ENCODE measurements at regions of chr4 and their contacts with region 1.

Region 1: DNA sequence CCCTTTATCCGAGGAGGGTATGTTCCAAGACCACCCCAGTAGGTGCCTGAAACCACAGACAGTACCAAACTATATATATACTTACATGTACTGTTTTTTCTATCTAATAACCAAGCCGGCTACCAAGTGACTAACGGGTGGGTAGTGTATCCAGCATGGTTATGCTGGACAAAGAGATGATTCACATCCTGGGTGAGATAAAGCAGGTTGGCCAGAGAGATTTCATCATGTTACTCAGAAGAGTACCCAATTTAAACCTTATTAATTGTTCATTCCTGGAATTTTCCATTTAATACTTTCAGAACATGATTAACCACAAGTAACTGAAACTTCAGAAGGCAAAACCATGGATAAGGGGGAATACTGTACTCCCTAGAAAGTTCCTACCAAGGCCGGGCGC is 46.5 kb downstream of the RFC1 start:
- DNase-seq: peak; percentile 94
- H3K4me3 ChIP-seq: peak overlapping the region in 2 of 3 experiments; percentile 22 to 35
- H3K27ac ChIP-seq: peak overlapping the region; percentile 83
- H3K4me1 ChIP-seq: peaks cover 25% of the 10 kb centered on the region
- H3K27me3 ChIP-seq: no peaks in the 10 kb centered on the region
- CTCF ChIP-seq: no peak

Region 2: DNA sequence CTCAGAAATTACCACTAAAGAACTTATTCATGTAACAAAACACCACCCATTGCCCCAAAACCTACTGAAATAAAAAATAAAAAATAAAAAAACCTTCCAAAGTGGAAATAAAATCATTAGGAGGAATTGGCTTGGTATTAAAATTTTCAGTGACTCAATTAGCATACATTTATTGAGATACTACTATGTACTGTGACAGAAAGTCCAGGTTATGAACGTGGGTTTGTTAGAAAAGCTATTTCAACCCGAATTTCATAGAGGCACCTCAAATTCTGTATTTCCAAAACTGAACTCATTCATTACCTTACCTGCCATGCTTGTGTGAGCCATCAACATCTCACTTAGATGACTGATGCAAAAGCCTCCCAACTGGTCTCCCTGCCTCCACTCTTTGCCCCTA is 240.8 kb before region 1 on chr4:
- CTCF ChIA-PET with region 1: no interaction called
- dilution Hi-C with region 1: no loop called
- in situ Hi-C with region 1: no loop called
- intact Hi-C with region 1: no loop called
- DNase-seq: no peak
- H3K4me3 ChIP-seq: no peak overlapping the region
- H3K27ac ChIP-seq: no peak overlapping the region
- H3K4me1 ChIP-seq: peaks cover 4% of the 10 kb centered on the region
- H3K27me3 ChIP-seq: no peaks in the 10 kb centered on the region
- CTCF ChIP-seq: no peak

Region 3: GRCh38 chr4:39353478-39354253 is 34.0 kb after region 1 on chr4:
- CTCF ChIA-PET with region 1: no interaction called
- dilution Hi-C with region 1: no loop called
- in situ Hi-C with region 1: no loop called
- intact Hi-C with region 1: loop called (anchors 5 kb)
- DNase-seq: peak; percentile 48
- H3K4me3 ChIP-seq: peak overlapping the region; percentile 29 to 52 (median 34)
- H3K27ac ChIP-seq: peak overlapping the region; percentile 93
- H3K4me1 ChIP-seq: peaks cover 18% of the 10 kb centered on the region
- H3K27me3 ChIP-seq: no peaks in the 10 kb centered on the region
- CTCF ChIP-seq: no peak

Region 4: DNA sequence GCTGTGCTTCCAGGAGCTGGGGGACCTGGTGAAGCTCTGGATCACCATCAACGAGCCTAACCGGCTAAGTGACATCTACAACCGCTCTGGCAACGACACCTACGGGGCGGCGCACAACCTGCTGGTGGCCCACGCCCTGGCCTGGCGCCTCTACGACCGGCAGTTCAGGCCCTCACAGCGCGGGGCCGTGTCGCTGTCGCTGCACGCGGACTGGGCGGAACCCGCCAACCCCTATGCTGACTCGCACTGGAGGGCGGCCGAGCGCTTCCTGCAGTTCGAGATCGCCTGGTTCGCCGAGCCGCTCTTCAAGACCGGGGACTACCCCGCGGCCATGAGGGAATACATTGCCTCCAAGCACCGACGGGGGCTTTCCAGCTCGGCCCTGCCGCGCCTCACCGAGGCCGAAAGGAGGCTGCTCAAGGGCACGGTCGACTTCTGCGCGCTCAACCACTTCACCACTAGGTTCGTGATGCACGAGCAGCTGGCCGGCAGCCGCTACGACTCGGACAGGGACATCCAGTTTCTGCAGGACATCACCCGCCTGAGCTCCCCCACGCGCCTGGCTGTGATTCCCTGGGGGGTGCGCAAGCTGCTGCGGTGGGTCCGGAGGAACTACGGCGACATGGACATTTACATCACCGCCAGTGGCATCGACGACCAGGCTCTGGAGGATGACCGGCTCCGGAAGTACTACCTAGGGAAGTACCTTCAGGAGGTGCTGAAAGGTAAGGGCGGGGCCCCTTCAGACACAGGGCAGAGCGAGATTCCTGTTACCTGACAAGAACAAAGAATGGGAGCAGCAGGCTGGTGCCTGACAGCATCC is 127.3 kb after region 1 on chr4:
- CTCF ChIA-PET with region 1: no interaction called
- dilution Hi-C with region 1: no loop called
- in situ Hi-C with region 1: no loop called
- intact Hi-C with region 1: loop called (anchors 5 kb)
- DNase-seq: peak; percentile 43
- H3K4me3 ChIP-seq: peak overlapping the region in 2 of 3 experiments; percentile 27 to 47
- H3K27ac ChIP-seq: no peak overlapping the region
- H3K4me1 ChIP-seq: peaks cover 12% of the 10 kb centered on the region
- H3K27me3 ChIP-seq: no peaks in the 10 kb centered on the region
- CTCF ChIP-seq: peak in 1 of 2 donors; percentile 15

Measured in mammary epithelial cell (primary cell).